HEK293T (cell line): ENCODE measurements at regions of chr6 and their contacts with region 1.

Region 1: DNA sequence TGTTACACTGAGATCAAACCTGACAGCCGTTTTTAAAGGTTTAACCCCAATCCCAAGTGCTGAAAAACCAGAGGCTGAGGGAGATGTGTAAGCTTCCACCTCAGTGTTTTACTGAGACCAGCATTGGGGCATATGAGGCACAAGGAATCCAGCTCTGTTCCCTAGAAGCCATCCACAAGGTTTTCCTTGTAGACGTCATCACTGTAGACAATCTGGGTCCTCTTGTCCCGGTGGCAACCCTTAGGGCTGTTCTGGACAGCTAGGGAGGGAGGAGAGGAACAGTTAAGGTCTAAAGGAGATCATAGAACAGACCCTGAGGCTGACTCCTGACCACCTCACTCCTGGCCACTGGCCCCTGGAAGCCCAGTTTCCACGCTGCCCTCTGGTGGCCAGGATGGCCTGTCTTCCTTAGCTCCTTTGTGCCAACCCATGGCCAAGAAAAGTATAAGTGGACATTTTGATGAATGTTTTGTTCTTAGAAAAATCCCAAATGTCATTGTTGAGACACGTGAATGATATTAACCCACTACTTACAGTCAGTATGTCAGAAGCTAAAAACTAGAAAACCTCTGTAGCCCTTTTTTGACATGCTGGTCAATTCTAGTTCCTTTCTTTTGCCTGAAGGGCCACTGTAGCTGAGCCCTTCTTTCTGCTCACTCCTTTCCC is 6.4 kb downstream of the CFB start:
- DNase-seq: peak; percentile 57

Region 2: GRCh38 chr6:31901953-31902643 is 50.2 kb before region 1 on chr6 and contains the start of gene ZBTB12:
- CTCF ChIA-PET with region 1: interaction called, 5 read pairs
- POLR2A ChIA-PET with region 1: interaction called, 16 read pairs
- DNase-seq: peak; percentile 87

Region 3: GRCh38 chr6:31940256-31940664 is 12.0 kb before region 1 on chr6:
- CTCF ChIA-PET with region 1: interaction called, 10 read pairs
- POLR2A ChIA-PET with region 1: interaction called, 13 read pairs
- DNase-seq: no peak

Region 4: GRCh38 chr6:31971993-31972708 is 19.9 kb after region 1 on chr6 and contains the start of gene DXO:
- CTCF ChIA-PET with region 1: no interaction called
- POLR2A ChIA-PET with region 1: interaction called, 84 read pairs
- DNase-seq: peak; percentile 95